Aorta (tissue), 5 donors: ENCODE measurements at regions of chr7 and their contacts with region 1.

Region 1: GRCh38 chr7:134782121-134782623 is 2.7 kb downstream of the CALD1 start:
- DNase-seq: no peak
- ATAC-seq: no peak
- H3K4me3 ChIP-seq: peak overlapping the region; percentile 99 to 100
- H3K27ac ChIP-seq: peak overlapping the region; percentile 79 to 100
- H3K4me1 ChIP-seq: peaks cover 6 to 19% of the 10 kb centered on the region in 2 donors
- H3K27me3 ChIP-seq: no peaks in the 10 kb centered on the region

Region 2: DNA sequence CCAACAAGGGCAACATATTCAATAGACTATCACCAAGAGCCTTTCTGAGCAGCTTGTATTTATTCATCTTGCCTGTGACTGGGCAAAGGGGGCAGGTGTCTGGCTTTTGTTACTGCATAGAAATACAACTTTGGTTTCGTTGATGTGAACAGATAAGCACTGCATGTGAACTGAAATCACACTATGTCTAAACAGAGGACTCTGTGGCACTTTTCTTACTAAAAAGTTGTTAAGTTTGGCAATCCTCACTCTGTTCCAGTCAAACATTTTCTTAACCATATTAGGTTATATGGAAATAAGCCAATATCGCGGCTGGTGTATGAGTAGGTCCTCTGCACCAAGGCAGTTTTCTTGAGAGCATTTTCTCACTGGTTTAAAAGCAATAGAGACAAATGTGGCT is 45.7 kb after region 1 on chr7:
- intact Hi-C with region 1: loop called (anchors 5 kb)
- DNase-seq: no peak
- ATAC-seq: peak; percentile 78
- H3K4me3 ChIP-seq: no peak overlapping the region
- H3K27ac ChIP-seq: peak overlapping the region; percentile 82 to 98
- H3K4me1 ChIP-seq: peaks cover 10% of the 10 kb centered on the region in 2 donors
- H3K27me3 ChIP-seq: no peaks in the 10 kb centered on the region

Region 3: DNA sequence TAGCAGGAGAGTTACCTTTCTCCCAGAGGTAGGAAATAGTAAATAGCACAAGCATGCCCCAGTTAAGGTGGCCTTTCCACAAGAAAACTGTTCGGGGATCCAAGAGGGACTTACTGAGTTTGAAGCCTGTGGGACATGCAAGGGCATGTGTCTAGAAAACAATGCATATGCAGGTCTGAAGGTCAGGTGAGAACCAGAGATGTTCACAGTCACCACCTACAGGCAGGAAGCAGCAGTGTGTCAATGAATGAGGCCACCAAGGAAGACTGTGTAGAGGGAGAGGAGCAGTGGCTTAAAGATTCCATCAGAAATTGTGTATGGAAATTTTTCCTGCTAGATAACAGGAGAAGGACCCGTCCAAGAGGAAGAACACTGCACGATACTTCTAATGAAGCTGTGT is 63.3 kb after region 1 on chr7:
- intact Hi-C with region 1: loop called in 1 of 2 experiments (anchors 5 kb)
- DNase-seq: no peak
- ATAC-seq: no peak
- H3K4me3 ChIP-seq: no peak overlapping the region
- H3K27ac ChIP-seq: no peak overlapping the region
- H3K4me1 ChIP-seq: peaks cover 10 to 39% of the 10 kb centered on the region in 2 donors
- H3K27me3 ChIP-seq: no peaks in the 10 kb centered on the region

Region 4: GRCh38 chr7:134891262-134891695 is 109.1 kb after region 1 on chr7:
- intact Hi-C with region 1: loop called in 1 of 2 experiments (anchors 5 kb)
- DNase-seq: peak; percentile 82 to 83
- ATAC-seq: peak; percentile 91
- H3K4me3 ChIP-seq: peak overlapping the region; percentile 1 to 71
- H3K27ac ChIP-seq: peak overlapping the region; percentile 1 to 99
- H3K4me1 ChIP-seq: peaks cover 4 to 14% of the 10 kb centered on the region in 2 donors
- H3K27me3 ChIP-seq: no peaks in the 10 kb centered on the region

Region 5: GRCh38 chr7:134932707-134933370 is 150.7 kb after region 1 on chr7:
- intact Hi-C with region 1: loop called (anchors 5 kb)
- DNase-seq: peak; percentile 90 to 93
- ATAC-seq: peak; percentile 83
- H3K4me3 ChIP-seq: peak overlapping the region in 1 of 2 donors; percentile 34
- H3K27ac ChIP-seq: peak overlapping the region; percentile 93 to 94
- H3K4me1 ChIP-seq: peaks cover 5 to 17% of the 10 kb centered on the region in 2 donors
- H3K27me3 ChIP-seq: no peaks in the 10 kb centered on the region

Region 6: GRCh38 chr7:135170274-135170997 is 388.3 kb after region 1 on chr7 and contains the start of gene CYREN:
- intact Hi-C with region 1: loop called in 1 of 2 experiments (anchors 10 kb)
- DNase-seq: peak; percentile 98 to 99
- ATAC-seq: peak; percentile 98
- H3K4me3 ChIP-seq: peak within 1 kb of the TSS; percentile 30 to 74
- H3K27ac ChIP-seq: peak within 1 kb of the TSS; percentile 52 to 94
- H3K4me1 ChIP-seq: peaks cover 2 to 13% of the 10 kb centered on the region in 2 donors
- H3K27me3 ChIP-seq: no peaks in the 10 kb centered on the region
- total RNA-seq, gene CYREN: 22.7 to 31.7 TPM